A549 (cell line): ENCODE measurements at regions of chr1 and their contacts with region 1.

Region 1: GRCh38 chr1:241998412-241998921 is 431 bp downstream of the MAP1LC3C start:
- DNase-seq: peak; percentile 82 to 89
- ATAC-seq: peak; percentile 95 to 97
- H3K4me3 ChIP-seq: peak overlapping the region; percentile 25
- H3K27ac ChIP-seq: peak overlapping the region; percentile 27 to 74
- H3K4me1 ChIP-seq: peaks cover 7% of the 10 kb centered on the region; the same call in 2 of the 3 replicates
- CTCF ChIP-seq: peak; percentile 94
- EP300 ChIP-seq: no peak
- POLR2A ChIP-seq: no peak
- RAD21 ChIP-seq: peak; percentile 39 to 59

Region 2: GRCh38 chr1:241888232-241888631 is 110.2 kb before region 1 on chr1:
- CTCF ChIA-PET with region 1: interaction called, 106 read pairs
- POLR2A ChIA-PET with region 1: no interaction called
- DNase-seq: no peak
- ATAC-seq: no peak
- H3K4me3 ChIP-seq: no peak overlapping the region
- H3K27ac ChIP-seq: no peak overlapping the region
- H3K4me1 ChIP-seq: no peaks in the 10 kb centered on the region
- CTCF ChIP-seq: no peak
- EP300 ChIP-seq: no peak
- POLR2A ChIP-seq: no peak
- RAD21 ChIP-seq: no peak

Region 3: GRCh38 chr1:241895013-241895412 is 103.5 kb before region 1 on chr1:
- CTCF ChIA-PET with region 1: interaction called, 106 read pairs
- POLR2A ChIA-PET with region 1: no interaction called
- DNase-seq: no peak
- ATAC-seq: no peak
- H3K4me3 ChIP-seq: no peak overlapping the region
- H3K27ac ChIP-seq: no peak overlapping the region
- H3K4me1 ChIP-seq: no peaks in the 10 kb centered on the region
- CTCF ChIP-seq: no peak
- EP300 ChIP-seq: no peak
- POLR2A ChIP-seq: no peak
- RAD21 ChIP-seq: no peak

Region 4: DNA sequence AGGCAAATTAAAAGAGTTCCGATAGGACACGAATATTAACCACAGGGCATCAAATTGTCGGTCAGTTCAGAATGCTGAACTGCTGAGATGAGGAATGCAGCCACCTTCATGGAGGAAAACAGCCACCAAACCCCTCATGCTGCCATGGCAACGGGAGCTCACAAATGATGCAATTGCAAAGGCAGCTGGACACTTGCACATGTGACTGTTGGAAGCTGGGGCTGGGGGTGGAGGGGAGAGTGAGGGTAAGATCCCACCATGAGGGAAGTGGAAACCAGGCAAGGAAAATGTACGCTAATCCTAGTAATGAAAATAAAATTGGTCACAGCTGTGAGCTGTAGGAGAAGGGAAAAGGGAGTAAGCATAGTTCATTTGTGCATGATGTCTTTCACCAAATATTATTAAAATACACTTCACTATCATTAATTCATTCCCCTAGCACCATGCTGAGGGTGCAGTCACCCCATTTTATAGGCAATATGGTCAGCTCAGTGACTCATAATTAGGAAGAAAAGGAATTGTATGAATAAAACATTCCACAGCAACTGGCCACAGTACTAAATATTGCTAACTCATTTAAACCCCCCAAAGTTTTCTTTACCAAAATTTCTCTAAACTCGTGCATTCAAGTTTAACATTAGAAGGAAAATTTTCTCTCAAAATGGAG is 25.6 kb before region 1 on chr1:
- CTCF ChIA-PET with region 1: interaction called, 11 read pairs
- POLR2A ChIA-PET with region 1: no interaction called
- DNase-seq: peak in 1 of 2 experiments; percentile 24
- ATAC-seq: peak; percentile 42 to 64; a peak in 3 of 6 replicates
- H3K4me3 ChIP-seq: no peak overlapping the region
- H3K27ac ChIP-seq: no peak overlapping the region
- H3K4me1 ChIP-seq: peaks cover 10% of the 10 kb centered on the region
- CTCF ChIP-seq: no peak
- EP300 ChIP-seq: no peak
- POLR2A ChIP-seq: no peak
- RAD21 ChIP-seq: no peak

Region 5: DNA sequence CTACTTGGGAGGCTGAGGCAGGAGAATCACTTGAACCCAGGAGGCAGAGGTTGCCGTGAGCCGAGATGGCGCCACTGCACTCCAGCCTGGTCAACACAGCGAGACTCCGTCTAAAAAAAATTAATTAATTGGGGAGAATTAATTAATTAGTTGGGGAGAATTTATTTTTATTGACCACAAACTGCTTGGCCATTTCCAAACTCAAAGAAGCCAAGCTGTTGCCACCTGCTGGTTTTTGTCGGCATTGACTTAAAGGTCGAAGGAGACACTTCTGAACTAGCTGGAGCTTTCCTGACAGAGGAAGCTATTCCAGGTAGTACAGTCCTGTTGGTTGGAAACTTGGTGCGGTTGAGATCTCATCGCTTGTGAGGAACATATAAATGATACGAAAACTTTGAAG is 12.7 kb before region 1 on chr1:
- CTCF ChIA-PET with region 1: interaction called, 75 read pairs
- POLR2A ChIA-PET with region 1: no interaction called
- DNase-seq: peak; percentile 62 to 76
- ATAC-seq: peak; percentile 75 to 80; a peak in 5 of 6 replicates
- H3K4me3 ChIP-seq: no peak overlapping the region
- H3K27ac ChIP-seq: no peak overlapping the region
- H3K4me1 ChIP-seq: peaks cover 19% of the 10 kb centered on the region; the same call in 2 of the 3 replicates
- CTCF ChIP-seq: peak; percentile 55
- EP300 ChIP-seq: no peak
- POLR2A ChIP-seq: no peak
- RAD21 ChIP-seq: peak; percentile 47 to 62; a peak in 4 of 5 replicates

Region 6: DNA sequence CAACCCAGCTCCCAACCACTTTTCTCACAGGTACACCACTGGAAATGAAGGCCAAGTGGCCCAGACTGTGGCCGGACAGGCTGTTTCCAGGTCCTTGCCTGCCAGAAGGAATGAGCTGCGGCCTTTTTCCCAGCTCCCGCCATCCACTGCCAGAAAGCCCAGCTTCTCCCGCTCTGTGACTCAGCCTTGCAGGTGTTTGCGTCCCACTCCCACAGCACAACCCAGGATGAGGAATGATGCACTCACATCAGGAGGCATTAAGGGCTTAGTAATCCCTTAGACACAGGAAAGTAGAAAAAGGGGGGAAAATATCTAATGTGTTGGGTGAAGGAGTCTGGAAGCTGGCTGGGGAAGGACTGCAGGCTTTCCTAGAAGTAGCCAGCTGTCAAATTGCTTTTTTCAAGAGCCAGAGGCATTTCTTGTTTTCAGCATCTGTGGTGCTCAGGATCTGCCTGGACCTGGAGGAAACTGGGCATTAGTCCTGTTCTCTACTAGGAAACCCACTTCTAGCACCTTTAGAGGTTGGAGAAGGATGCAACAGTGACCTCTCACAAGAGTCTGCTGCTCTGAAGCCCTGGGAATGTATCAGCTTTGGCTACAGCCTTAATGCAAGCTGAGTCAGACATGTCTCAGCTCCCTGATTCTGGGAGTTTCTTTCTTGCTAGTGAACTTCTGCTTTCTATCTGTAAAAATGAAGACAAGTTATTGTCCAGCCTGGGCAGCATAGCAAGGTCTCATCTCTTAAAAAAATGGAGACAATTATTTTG is 13.6 kb after region 1 on chr1:
- CTCF ChIA-PET with region 1: interaction called, 42 read pairs
- POLR2A ChIA-PET with region 1: no interaction called
- DNase-seq: no peak
- ATAC-seq: peak in 1 of 2 experiments; percentile 45; a peak in 3 of 6 replicates
- H3K4me3 ChIP-seq: no peak overlapping the region
- H3K27ac ChIP-seq: no peak overlapping the region
- H3K4me1 ChIP-seq: no peaks in the 10 kb centered on the region
- CTCF ChIP-seq: no peak
- EP300 ChIP-seq: no peak
- POLR2A ChIP-seq: no peak
- RAD21 ChIP-seq: no peak

Region 7: DNA sequence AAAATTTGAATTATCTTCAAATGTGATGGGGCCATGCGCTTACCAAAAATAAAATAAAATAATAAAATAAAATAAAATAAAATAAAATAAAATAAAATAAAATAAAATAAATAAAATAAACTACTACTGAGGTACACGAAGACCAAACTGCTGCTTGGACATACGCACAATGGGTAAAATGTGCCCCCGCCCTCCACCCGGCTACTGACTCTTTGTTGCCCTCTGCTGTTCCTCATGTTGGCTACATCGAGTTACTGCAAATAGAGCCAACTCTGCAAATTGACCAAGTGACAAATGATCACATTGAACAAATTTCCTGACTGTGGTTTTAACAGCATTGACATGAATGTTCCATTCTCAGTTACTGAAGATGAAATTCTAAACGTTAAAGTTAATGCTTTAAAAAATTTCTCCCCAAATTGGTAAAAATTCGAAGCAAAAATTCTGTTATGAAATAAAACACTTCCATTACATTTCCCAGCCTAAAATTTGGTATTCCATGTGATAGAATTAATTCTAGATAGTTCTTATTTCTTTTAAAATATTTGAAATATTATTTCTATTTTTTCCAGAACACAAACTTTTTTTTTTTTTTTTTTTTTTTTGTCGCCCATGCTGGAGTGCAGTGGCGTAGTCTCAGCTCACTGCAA is 19.2 kb after region 1 on chr1:
- CTCF ChIA-PET with region 1: interaction called, 42 read pairs
- POLR2A ChIA-PET with region 1: no interaction called
- DNase-seq: peak; percentile 69 to 72
- ATAC-seq: peak; percentile 68 to 74; a peak in 4 of 6 replicates
- H3K4me3 ChIP-seq: no peak overlapping the region
- H3K27ac ChIP-seq: no peak overlapping the region
- H3K4me1 ChIP-seq: peaks cover 8% of the 10 kb centered on the region; the same call in 2 of the 3 replicates
- CTCF ChIP-seq: peak; percentile 66
- EP300 ChIP-seq: no peak
- POLR2A ChIP-seq: no peak
- RAD21 ChIP-seq: peak; percentile 64 to 73

Region 8: DNA sequence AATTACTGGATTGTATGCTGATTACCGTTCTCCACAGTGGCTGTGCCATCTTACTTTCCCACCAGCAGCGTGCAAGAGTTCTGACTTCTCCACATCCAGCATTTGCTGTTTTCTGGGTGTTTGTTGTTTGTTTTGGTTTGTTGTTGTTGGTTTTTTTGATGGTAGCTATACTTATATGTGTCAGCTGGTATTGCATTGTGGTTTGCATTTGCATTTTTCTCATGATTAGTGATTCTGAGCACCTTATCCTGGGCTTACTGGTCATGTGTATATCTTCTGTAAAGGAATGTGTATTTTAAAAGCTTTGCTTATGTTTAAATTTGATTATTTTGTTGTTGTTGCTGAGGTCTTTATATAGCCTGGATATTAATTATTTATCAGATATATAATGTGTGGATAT is 67.3 kb after region 1 on chr1:
- CTCF ChIA-PET with region 1: no interaction called
- POLR2A ChIA-PET with region 1: no interaction called
- DNase-seq: no peak
- ATAC-seq: no peak
- H3K4me3 ChIP-seq: no peak overlapping the region
- H3K27ac ChIP-seq: no peak overlapping the region
- H3K4me1 ChIP-seq: no peaks in the 10 kb centered on the region
- CTCF ChIP-seq: no peak
- EP300 ChIP-seq: no peak
- POLR2A ChIP-seq: no peak
- RAD21 ChIP-seq: no peak